HEK293 (cell line): ENCODE measurements at regions of chr16 and their contacts with region 1.

Region 1: DNA sequence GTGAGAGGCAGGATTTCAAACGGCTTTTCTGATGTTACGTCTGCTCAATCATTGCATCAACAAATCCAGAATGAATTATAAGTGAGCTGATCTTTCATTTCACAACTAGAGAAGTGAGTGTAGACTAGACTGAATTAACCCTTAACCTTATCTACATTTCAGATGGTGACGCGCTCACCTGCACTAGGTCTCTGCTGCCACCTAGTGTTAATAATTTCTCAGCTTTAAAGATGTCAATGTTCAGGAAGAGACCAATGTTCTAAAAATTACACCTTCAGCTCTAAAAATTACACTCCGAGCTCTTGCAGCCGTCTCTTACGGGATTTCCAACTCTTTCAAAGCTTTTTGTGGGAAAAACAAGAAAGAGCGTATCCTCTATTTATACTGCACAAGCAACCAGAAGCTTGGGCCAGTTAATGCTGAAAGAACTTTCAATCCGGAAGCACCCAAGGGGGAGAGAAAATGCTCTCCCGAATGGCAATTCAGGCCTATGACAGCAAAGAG is 88.2 kb upstream of the FA2H start:
- H3K4me3 ChIP-seq: no peak overlapping the region
- H3K27ac ChIP-seq: no peak overlapping the region
- H3K4me1 ChIP-seq: no peaks in the 10 kb centered on the region
- CTCF ChIP-seq: peak; percentile 59

Region 2: DNA sequence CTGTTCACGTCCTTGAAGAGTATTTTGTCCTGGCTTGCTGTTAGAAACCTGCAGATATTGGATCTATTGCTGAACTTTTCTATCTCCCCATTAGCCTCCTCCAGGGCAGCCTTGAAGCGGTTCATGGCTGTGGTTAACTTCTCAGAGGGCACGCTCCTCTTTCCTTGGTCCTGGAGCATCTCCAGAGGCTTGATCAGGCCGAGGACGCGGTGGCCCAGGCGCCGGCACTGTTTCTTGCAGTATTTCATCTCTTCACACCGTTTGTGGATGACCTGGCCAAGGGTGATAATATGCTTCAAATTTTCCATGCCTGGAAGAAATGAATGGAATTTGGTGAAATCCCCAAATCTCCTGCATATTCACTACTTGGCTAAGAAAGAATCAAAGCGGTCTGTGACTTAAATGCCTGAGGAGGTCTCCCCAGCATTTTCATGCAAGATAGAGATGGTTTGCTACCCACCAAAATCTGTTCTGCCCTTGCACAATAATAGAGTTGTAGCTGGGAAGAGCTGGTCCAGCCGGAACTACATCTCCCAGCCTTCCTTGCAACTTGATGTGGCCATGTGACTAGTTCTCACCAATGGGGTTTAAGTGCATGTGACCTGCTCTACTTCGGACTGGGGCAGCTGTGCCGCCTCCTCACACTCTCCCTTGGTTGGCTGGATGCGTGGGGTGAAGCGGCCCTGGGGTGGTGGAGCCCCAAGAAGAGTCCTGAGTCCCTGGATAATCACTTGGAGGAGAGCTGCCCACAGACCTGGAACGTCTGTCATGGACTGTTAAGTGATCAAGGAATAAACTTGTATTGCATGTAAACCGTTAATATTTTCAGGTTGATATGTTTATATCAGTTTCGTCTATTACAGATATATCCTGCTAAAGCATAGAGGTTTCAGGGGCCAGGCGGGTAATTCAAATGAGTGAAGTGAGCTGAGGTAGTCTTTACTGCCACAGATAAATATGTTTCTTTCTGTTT is 167.1 kb before region 1 on chr16:
- CTCF ChIA-PET with region 1: interaction called, 15 read pairs
- POLR2A ChIA-PET with region 1: no interaction called
- H3K4me3 ChIP-seq: peak overlapping the region; percentile 41
- H3K27ac ChIP-seq: no peak overlapping the region
- H3K4me1 ChIP-seq: no peaks in the 10 kb centered on the region
- CTCF ChIP-seq: no peak

Region 3: DNA sequence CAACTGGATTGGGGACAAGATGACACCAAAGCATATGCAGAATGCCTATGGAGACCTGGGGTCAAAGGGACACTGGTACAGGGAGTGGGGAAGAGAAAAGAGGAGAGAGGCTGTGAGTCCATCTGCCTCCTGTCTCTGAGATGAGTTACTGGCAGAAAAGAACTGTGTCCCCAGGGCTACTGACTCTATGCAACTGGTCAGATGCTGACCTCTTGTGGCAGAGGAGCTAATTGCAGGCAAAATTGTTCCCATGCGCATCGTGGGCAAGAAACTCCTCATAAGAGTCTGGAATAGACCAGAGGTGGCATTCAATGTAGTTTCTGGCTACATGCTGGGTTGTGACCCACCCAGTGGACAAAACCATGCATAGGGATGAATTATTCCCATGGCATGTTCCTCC is 136.1 kb before region 1 on chr16:
- CTCF ChIA-PET with region 1: interaction called, 12 read pairs
- POLR2A ChIA-PET with region 1: no interaction called
- H3K4me3 ChIP-seq: no peak overlapping the region
- H3K27ac ChIP-seq: no peak overlapping the region
- H3K4me1 ChIP-seq: no peaks in the 10 kb centered on the region
- CTCF ChIP-seq: peak; percentile 11; the same call in 1 of the 2 replicates

Region 4: DNA sequence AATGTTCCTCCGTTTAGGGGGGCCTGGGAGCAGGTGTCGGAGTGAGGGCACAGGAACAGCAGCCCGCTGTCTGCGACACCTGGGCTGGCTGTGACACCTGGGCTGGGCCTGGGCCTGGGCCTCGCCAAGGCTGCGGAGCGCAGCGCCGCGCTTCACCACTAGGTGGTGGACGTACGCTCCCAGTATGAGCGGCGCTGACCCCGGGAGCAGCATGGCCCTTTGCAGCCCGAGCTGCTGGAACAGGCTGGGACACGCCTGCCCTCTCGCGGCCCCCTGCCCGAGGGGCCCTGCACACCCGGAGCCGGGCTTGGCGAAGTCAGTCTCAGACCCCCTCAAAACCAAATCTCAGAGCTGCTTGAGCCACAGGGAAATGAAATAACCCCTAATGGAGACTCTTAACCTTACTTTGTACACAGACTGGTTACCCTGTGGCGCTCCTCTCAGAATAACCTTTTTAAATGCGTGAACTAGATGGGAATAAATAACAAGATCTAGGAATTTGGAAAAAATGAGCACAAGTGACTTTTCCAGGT is 49.6 kb before region 1 on chr16:
- CTCF ChIA-PET with region 1: interaction called, 78 read pairs
- POLR2A ChIA-PET with region 1: no interaction called
- H3K4me3 ChIP-seq: no peak overlapping the region
- H3K27ac ChIP-seq: no peak overlapping the region
- H3K4me1 ChIP-seq: no peaks in the 10 kb centered on the region
- CTCF ChIP-seq: peak; percentile 99

Region 5: DNA sequence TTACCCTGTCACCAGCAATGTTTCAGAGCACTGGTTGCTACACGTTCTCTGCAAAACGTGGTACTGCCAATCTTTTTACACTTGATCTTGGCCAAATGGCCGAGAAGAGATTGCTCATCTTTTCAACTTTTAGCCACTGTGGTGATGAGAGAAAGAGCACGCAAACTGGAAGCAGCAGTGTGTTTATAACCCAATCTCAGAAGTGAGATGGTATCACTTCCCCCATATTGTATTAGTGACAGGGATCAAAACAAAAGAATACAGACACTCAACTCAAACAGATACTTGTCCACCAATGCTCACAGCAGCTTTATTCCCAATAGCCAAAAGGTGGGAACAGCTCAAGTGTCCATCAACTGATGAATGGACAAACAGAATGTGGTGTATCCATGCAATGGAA is 16.1 kb before region 1 on chr16:
- CTCF ChIA-PET with region 1: interaction called, 13 read pairs
- POLR2A ChIA-PET with region 1: no interaction called
- H3K4me3 ChIP-seq: no peak overlapping the region
- H3K27ac ChIP-seq: no peak overlapping the region
- H3K4me1 ChIP-seq: no peaks in the 10 kb centered on the region
- CTCF ChIP-seq: no peak

Region 6: GRCh38 chr16:74901606-74902005 is 38.8 kb after region 1 on chr16:
- CTCF ChIA-PET with region 1: interaction called, 10 read pairs
- POLR2A ChIA-PET with region 1: no interaction called
- H3K4me3 ChIP-seq: no peak overlapping the region
- H3K27ac ChIP-seq: no peak overlapping the region
- H3K4me1 ChIP-seq: no peaks in the 10 kb centered on the region
- CTCF ChIP-seq: no peak